ENCODE measurements at regions of chr12 and their contacts with region 1.

Region 1: DNA sequence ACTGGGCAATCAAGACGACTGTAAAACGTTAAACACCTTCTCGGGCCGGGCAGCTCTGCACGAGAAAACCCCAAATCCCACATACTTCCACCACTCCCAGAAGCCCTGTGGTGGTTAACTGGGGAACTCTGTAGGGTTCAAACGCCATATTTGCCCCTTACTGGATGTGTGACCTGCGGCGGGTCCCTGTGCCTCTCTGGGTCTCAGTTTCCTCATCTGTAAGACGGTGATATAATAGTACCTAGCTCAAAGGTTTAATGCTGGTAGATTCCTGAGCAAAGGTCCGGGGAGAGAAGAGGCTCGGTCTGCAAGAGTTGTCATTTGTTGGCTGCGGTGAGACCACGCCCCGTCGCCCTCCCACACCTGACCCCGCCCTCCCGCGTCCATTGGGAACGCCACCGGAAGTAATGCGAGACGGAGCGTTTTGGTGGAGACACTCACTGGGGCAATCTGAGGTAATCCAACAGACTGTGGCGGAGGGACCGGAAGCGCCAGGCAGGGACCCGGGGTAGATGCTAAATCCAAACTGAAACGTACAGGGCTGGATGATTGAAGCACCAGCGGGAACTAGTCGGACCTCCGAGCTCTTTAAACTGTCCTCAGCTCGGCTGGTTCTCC is 661 bp upstream of the OGFOD2 start:
- DNase-seq: peak; percentile 98
- H3K4me3 ChIP-seq: peak overlapping the region; percentile 82 to 93 (median 87)
- H3K27ac ChIP-seq: peak overlapping the region; percentile 83
- H3K4me1 ChIP-seq: peaks cover 18% of the 10 kb centered on the region
- H3K27me3 ChIP-seq: no peaks in the 10 kb centered on the region
- CTCF ChIP-seq: no peak

Region 2: GRCh38 chr12:122646517-122647217 is 327.7 kb before region 1 on chr12:
- CTCF ChIA-PET with region 1: no interaction called
- dilution Hi-C with region 1: no loop called
- in situ Hi-C with region 1: loop called in 1 of 2 experiments (anchors 25 kb)
- intact Hi-C with region 1: no loop called
- DNase-seq: peak; percentile 90
- H3K4me3 ChIP-seq: no peak overlapping the region
- H3K27ac ChIP-seq: peak overlapping the region; percentile 70
- H3K4me1 ChIP-seq: peaks cover 7% of the 10 kb centered on the region
- H3K27me3 ChIP-seq: no peaks in the 10 kb centered on the region
- CTCF ChIP-seq: no peak

Region 3: DNA sequence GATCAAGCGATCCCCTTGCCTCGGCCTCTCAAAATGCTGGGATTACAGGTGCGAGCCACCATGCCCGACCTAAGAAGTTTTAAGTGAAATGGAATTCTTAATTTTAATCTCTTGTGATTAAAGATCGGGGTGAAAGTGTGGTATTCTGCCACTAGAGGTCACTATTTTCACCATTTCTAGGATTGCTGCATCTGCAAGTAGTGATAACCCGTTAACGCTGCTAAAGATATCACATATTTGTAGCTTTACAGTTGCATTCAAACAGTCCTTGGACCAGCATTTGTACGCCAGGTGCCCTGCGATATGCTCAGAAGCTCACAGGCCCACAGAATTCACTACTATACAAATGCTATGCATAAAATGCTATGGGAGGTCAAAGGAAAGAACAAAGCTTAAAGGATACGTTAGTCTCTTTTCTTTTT is 180.7 kb before region 1 on chr12:
- CTCF ChIA-PET with region 1: no interaction called
- dilution Hi-C with region 1: no loop called
- in situ Hi-C with region 1: loop called in 1 of 2 experiments (anchors 25 kb)
- intact Hi-C with region 1: no loop called
- DNase-seq: peak; percentile 39
- H3K4me3 ChIP-seq: no peak overlapping the region
- H3K27ac ChIP-seq: no peak overlapping the region
- H3K4me1 ChIP-seq: peaks cover 20% of the 10 kb centered on the region
- H3K27me3 ChIP-seq: no peaks in the 10 kb centered on the region
- CTCF ChIP-seq: peak; percentile 57 to 63

Region 4: DNA sequence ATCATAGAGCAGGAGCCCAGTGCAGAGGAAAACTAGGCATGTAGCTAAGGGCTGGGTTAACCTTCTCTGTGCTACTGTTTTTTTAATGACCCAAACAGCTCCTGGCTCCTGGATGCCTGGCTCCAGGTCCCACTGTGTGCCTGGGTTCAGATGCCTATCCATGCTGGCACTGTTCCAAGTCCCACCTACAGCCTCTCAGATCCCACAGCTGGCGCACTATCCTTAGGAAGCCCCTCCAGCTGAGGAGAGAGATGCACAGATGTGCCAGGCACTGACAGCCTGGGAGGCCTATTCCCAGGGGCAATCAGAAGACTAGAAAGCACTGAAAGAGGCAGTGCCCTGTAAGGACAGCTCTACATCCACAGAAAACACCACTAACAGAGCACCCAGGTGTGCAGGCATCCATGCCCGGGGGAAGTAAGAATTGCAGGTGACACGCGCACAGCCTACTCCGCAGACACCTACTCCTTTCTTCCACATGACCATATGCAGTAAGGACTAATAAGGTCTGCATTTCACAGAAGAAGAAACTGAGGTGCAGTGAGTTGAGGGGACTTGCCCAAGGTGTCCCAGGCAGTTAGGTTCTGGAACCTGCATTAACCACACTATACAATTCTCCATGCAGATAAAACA is 125.3 kb after region 1 on chr12:
- CTCF ChIA-PET with region 1: interaction called, 10 read pairs
- dilution Hi-C with region 1: no loop called
- in situ Hi-C with region 1: no loop called
- intact Hi-C with region 1: no loop called
- DNase-seq: no peak
- H3K4me3 ChIP-seq: no peak overlapping the region
- H3K27ac ChIP-seq: no peak overlapping the region
- H3K4me1 ChIP-seq: peaks cover 8% of the 10 kb centered on the region
- H3K27me3 ChIP-seq: no peaks in the 10 kb centered on the region
- CTCF ChIP-seq: no peak

Region 5: DNA sequence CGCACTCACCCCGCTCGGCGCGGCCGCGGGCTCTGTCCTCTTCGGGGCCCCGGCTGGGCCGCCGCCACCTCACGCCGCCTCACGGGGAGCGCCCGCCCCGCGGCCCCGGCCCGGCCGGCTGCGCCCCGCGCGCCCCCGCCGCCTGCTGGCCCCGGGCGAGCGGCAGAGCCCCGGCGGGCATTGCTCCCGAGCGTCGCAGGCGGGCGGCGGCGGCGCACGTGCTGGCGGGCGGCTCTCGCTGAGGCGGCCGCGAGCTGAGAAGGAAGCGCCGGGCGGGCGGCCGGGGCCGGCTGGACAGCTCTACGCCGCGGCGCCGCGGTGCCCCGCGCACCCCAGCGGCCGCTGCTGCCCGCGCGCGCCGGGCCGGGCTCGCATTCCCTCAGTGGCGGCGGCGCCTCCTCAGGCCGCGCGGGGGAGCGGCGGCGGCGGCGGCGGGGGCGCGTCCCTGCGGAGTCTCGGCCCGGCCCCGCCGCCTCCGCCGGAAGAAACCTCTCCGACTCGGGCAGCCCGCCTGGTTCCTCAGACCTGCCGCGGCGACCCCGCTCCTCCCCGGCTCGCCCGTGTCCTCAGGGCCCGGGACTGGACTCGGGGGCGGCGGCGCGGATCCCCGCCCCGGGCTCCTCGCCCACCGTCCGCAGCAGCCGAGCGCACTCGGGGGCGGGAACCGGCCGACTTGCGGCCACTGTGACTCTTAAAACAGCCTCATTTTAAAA is 176.5 kb after region 1 on chr12 and contains the start of gene PITPNM2:
- CTCF ChIA-PET with region 1: no interaction called
- dilution Hi-C with region 1: no loop called
- in situ Hi-C with region 1: no loop called
- intact Hi-C with region 1: loop called (anchors 2 kb)
- DNase-seq: peak; percentile 57
- H3K4me3 ChIP-seq: peak within 1 kb of the TSS; percentile 79 to 80 (median 79)
- H3K27ac ChIP-seq: peak within 1 kb of the TSS; percentile 62
- H3K4me1 ChIP-seq: peaks cover 18% of the 10 kb centered on the region
- H3K27me3 ChIP-seq: no peaks in the 10 kb centered on the region
- CTCF ChIP-seq: no peak
- total RNA-seq, gene PITPNM2: 7.5 to 14.9 TPM

Region 6: DNA sequence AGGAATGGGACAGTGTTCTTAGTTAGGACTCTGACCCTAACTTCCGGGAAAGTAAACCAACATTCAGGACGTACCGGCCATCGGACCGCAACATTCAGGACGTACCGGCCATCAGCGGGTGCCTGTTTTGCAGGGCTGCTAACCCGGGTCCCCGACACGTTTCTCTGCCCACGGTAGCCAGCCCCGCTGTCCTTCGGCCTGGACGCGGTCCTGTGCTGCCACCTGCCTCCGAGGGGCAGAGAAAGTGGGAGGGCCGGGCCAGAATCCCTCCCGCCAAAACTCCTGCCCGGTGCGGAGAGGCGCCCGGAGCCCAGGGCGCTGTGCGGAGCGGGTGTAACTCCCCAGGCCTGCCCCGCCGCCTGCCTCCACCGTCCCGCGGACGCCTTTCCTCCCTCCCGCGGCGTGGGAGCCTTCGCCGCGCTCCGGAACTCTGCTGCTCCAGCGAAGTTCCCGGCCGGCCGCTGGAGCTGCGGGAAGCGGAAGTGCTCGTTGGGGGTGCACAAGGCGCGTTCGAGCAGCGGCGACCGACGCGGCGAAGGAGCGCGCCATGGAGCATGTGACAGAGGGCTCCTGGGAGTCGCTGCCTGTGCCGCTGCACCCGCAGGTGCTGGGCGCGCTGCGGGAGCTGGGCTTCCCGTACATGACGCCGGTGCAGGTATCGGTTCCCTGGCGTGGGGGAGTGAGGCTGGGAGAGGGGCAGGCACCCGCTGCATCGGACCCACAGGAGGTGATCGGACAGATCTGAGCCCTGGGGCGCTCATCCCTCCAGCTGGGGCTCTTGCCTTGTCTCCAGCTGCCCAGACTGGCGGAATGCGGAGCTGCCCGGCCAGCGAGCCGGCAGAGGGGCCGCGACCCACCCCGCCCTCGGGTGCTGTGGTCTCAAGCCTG is 627.5 kb after region 1 on chr12 and contains the start of gene DDX55:
- CTCF ChIA-PET with region 1: no interaction called
- dilution Hi-C with region 1: no loop called
- in situ Hi-C with region 1: no loop called
- intact Hi-C with region 1: loop called (anchors 5 kb)
- DNase-seq: peak; percentile 81
- H3K4me3 ChIP-seq: peak within 1 kb of the TSS; percentile 89 to 100 (median 98)
- H3K27ac ChIP-seq: peak within 1 kb of the TSS; percentile 57
- H3K4me1 ChIP-seq: peaks cover 4% of the 10 kb centered on the region
- H3K27me3 ChIP-seq: no peaks in the 10 kb centered on the region
- CTCF ChIP-seq: peak; percentile 6 to 62
- total RNA-seq, gene DDX55: 19.5 to 25.8 TPM